Activated T-helper 1 cell treated with anti-CD3 and anti-CD28 coated beads, Interleukin-12 subunit alpha, Interleukin-12 subunit beta, Interleukin-2, Interleukin-4 antibody, amounts not matched to agents 30 ng/mL and 10 ng/mL and 1 ng/mL, durations not matched to agents 14 hours and 24 hours and 36 hours (primary cell): ENCODE measurements at regions of chr7 and their contacts with region 1.

Region 1: DNA sequence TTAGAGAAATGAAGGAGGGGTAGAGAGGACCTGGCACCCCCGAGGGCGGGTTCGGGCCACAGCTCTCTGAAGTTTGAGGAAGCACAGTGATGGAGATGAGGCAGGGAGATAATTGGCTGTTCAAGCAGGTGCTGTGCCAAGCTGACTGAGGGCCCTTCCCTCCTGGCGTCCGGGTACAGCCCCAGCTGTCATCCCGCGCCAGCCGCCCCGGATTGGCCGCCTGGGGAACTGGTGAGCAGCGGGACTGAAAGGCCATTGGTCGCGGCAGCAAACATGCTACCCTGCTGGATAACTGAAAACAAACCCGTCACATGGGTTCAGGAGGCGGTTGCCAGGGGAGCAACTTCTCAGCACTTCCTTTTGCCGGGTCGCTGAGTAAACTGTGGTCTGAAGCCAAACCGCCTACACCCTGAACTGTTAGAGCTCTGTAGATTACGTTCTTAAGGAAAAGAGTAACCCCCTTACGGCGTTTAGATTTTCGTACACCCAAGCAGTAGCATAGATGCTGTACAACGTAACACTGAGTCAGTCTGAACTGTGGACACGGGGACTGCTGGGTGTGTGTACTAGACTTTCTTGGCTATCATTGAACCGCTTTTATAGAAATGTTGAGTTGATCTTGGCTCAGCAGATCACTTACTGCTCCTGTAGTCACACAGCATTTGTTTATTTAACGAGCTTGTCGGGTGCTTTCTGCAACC is 1.3 kb downstream of the INSIG1 start:
- DNase-seq: peak; percentile 96
- H3K4me3 Mint-ChIP-seq: peak overlapping the region; percentile 91
- H3K27ac Mint-ChIP-seq: peak overlapping the region; percentile 97
- H3K4me1 Mint-ChIP-seq: peaks cover 46% of the 10 kb centered on the region
- H3K27me3 Mint-ChIP-seq: no peaks in the 10 kb centered on the region

Region 2: DNA sequence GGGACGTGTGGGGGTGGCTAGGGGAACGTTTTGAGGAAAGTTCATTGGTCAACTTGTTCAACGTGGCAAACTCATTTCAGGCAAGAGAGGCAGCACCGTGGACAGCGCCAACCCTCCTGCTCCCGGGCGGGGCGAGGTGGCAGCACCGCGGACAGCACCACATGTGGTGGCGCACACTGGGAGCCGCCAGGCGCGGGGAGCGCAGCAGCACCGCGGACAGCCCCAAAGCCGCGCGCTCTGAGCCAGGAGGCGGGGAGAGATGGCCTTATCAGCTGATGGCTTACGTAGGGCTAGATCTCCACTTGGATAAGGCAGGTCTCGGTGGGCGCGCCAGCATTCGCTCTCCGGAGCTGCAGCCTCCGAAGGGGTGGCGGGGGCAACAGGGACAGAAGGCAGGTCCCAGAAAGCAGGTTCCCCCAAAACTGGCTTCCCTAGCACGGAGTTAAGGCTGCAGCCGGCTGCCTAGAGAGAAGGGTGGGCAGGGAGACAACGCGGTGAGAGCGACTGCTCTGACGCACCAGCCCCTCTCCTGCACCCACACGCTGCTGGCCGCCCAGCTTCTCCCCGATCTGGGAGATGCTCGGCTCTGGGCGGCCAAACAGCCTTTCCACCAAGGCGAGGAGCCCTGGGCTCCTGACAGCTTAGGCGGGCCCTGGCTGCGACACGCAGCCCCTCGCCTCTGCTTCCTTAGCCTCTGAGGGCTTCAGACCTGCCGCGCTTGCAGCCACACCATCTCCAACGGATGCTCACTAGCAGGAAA is 228.8 kb before region 1 on chr7 and contains the start of gene HTR5A:
- intact Hi-C with region 1: loop called (anchors 1 kb)
- DNase-seq: peak; percentile 75
- H3K4me3 Mint-ChIP-seq: no peak within 1 kb of the TSS
- H3K27ac Mint-ChIP-seq: no peak within 1 kb of the TSS
- H3K4me1 Mint-ChIP-seq: no peaks in the 10 kb centered on the region
- H3K27me3 Mint-ChIP-seq: peaks cover 14% of the 10 kb centered on the region
- total RNA-seq, gene HTR5A: not detected in 2 replicates

Region 3: DNA sequence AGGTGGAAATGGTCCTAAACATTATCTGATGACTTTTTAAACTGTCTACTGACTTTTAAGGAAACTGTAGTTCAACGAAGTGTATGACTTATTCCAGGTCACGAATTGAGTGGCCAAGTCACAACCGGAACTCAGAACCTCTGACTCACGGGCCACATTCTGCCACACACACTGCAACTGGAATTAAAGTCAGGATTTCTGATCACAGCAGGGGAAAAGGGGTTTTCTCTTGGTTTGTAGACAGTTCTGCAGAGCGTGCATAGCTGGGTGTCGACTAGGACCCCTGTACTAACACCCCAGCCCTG is 21.3 kb before region 1 on chr7:
- intact Hi-C with region 1: loop called (anchors 1 kb)
- DNase-seq: peak; percentile 6
- H3K4me3 Mint-ChIP-seq: no peak overlapping the region
- H3K27ac Mint-ChIP-seq: no peak overlapping the region
- H3K4me1 Mint-ChIP-seq: peaks cover 28% of the 10 kb centered on the region
- H3K27me3 Mint-ChIP-seq: peaks cover 15% of the 10 kb centered on the region

Region 4: DNA sequence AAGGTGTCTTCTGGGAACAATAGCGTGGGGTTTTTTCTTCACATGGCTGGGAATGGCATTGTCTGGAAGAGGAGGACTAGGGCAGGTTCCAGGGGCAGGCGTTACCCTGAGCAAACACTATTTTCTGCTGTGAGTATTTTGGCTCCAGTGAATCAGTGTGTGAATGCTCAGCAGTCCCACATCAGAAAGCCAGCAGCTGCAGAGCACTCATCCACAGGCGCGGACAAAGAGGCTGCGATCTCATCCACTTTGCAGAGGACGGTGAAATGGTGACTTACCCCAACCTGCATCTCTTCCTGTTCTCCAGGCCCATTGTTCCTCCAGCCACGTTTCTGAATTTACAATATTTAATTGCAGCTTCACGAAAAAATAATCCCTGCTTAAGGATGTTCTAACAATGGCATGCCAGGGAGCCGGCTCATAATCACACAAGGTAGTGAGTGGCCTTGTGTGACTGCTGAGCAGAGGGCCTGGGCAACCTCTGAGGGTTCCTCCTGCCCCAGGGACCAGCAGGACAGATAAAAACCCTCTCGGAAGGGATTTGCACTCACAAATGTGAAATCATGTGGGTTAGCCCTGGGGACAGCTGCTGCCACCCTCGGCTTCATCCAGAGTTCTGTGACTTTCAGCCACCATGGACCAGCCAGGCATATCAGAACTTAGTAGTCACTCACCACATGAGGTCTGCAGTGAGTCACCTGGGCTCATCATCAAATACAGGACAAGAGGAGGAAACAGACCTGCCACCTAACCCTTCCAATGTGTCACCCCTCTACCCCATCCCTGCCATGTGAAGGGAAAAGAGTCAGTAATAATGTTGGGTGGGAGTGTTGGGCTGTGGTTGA is 94.0 kb after region 1 on chr7:
- intact Hi-C with region 1: no loop called
- DNase-seq: no peak
- H3K4me3 Mint-ChIP-seq: no peak overlapping the region
- H3K27ac Mint-ChIP-seq: no peak overlapping the region
- H3K4me1 Mint-ChIP-seq: no peaks in the 10 kb centered on the region
- H3K27me3 Mint-ChIP-seq: peaks cover 10% of the 10 kb centered on the region

Region 5: DNA sequence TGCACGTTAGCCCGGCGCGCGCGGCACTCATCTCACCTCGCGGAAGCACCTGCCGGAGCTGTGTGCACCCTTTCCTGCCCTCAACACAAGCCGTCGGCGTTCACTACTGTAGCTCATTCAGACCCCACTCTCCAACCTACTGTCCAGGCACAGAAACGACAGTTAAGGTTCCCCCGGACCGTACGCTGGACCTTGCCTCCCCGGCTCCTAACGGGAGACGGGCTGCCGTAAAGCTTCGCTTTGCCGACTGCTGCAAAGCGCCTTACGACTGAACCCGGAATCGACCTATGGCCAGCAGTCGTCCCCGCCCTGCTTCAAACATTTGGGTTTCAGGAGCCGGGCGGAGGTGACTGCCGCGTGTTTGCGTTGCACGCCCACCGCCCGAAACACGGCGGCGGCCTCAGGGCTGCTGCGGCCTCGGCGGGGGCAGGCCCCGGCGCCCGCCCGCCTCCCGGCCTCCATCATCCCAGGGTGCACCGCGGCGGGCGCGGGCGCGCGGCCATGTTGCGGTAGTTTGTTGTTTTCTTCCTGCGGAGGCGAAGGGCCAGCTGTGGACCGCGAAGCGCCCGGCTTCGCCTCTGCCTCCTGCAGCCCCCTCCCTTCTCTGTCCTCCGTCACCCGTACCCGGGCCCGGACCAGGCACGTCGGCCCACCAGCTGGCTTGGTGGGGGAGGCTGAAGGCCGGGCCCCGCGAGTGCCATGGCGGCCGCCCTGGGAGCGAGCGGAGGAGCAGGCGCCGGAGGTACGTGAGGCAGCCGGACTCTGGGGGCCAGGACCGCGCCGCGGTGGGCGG is 345.4 kb after region 1 on chr7 and contains the start of gene RBM33:
- intact Hi-C with region 1: loop called (anchors 1 kb)
- DNase-seq: peak; percentile 78
- H3K4me3 Mint-ChIP-seq: peak within 1 kb of the TSS; percentile 99
- H3K27ac Mint-ChIP-seq: peak within 1 kb of the TSS; percentile 99
- H3K4me1 Mint-ChIP-seq: peaks cover 41% of the 10 kb centered on the region
- H3K27me3 Mint-ChIP-seq: no peaks in the 10 kb centered on the region
- total RNA-seq, gene RBM33: 75.2 and 78.9 TPM in 2 replicates

Region 6: GRCh38 chr7:156640257-156640948 is 1341.4 kb after region 1 on chr7 and contains the start of gene RNF32:
- intact Hi-C with region 1: loop called (anchors 5 kb)
- DNase-seq: peak; percentile 95
- H3K4me3 Mint-ChIP-seq: peak within 1 kb of the TSS; percentile 93
- H3K27ac Mint-ChIP-seq: peak within 1 kb of the TSS; percentile 99
- H3K4me1 Mint-ChIP-seq: peaks cover 53% of the 10 kb centered on the region
- H3K27me3 Mint-ChIP-seq: peaks cover 6% of the 10 kb centered on the region
- total RNA-seq, gene RNF32: 2.1 and 2.2 TPM in 2 replicates